Natural killer cell (primary cell): ENCODE measurements at regions of chr1 and their contacts with region 1.

Region 1: DNA sequence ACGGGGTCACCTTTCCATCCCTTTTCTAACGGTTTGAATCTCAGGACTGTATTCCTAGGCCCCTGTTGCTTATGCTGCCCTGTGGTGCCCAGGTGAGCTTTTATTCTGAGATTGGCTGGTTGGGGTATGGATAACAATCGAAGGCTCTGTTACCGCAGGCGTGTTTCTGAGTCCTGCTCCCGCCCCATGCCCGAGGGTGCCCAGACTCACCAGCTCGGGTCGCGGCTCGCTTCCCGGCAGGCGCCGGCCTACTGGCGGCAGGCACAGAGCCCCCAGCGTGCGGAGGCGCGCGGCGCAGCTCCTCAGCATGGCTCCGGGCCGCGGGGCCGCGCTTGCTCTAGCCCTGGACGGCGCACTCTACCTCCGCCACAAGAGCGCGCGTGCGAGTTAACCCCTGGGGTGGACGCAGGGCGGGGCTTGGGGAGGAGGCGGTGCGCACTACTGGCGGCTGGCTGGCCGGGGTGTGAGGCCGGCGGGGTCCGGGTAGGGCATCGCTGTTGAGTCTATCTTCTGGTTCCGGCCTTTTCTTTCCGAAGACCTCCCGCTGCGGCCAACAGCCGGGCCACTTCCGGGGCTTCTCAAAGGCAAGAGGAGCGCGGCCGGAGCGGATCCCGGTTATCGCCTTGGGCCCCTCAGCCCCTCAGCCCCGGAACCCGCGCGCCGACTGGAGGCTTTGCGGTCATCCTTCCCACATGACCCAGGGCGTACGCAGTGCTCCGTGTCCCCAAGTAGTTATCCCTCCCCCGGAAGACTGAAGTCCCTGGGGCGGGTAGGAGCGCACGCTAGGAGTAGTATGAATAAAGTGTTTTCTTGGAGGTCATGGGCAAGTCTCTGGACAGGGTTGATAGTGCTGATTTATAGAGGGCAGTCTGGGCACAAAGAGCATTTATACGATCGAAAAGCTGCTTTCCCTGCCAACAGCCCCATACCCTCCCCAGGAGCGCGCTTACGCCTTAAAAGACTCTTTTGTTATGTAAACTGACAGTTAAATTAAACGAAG is at the start of gene THEM4:
- DNase-seq: peak; percentile 92 to 93
- ATAC-seq: peak; percentile 95 to 99 (median 95)
- H3K4me3 ChIP-seq: peak within 1 kb of the TSS; percentile 74
- H3K4me3 Mint-ChIP-seq: peak within 1 kb of the TSS; percentile 86
- H3K27ac ChIP-seq: peak within 1 kb of the TSS; percentile 88
- H3K27ac Mint-ChIP-seq: peak within 1 kb of the TSS; percentile 93 to 94
- H3K4me1 ChIP-seq: peaks cover 28% of the 10 kb centered on the region
- H3K4me1 Mint-ChIP-seq: peaks cover 27 to 33% of the 10 kb centered on the region in 2 donors
- H3K27me3 ChIP-seq: no peaks in the 10 kb centered on the region
- H3K27me3 Mint-ChIP-seq: no peaks in the 10 kb centered on the region
- CTCF ChIP-seq: no peak
- total RNA-seq, gene THEM4: 11.9 to 16.2 (median 15.5) TPM

Region 2: GRCh38 chr1:151710187-151710840 is 199.1 kb before region 1 on chr1:
- intact Hi-C with region 1: no loop called
- DNase-seq: peak in 1 of 2 donors; percentile 43
- ATAC-seq: no peak
- H3K4me3 ChIP-seq: no peak overlapping the region
- H3K4me3 Mint-ChIP-seq: no peak overlapping the region
- H3K27ac ChIP-seq: no peak overlapping the region
- H3K27ac Mint-ChIP-seq: no peak overlapping the region
- H3K4me1 ChIP-seq: no peaks in the 10 kb centered on the region
- H3K4me1 Mint-ChIP-seq: peaks cover 0 to 6% of the 10 kb centered on the region in 2 donors
- H3K27me3 ChIP-seq: no peaks in the 10 kb centered on the region
- H3K27me3 Mint-ChIP-seq: peaks cover 10 to 26% of the 10 kb centered on the region in 2 donors
- CTCF ChIP-seq: no peak

Region 3: GRCh38 chr1:151867785-151868411 is 41.6 kb before region 1 on chr1:
- intact Hi-C with region 1: no loop called
- DNase-seq: no peak
- ATAC-seq: no peak
- H3K4me3 ChIP-seq: no peak overlapping the region
- H3K4me3 Mint-ChIP-seq: no peak overlapping the region
- H3K27ac ChIP-seq: no peak overlapping the region
- H3K27ac Mint-ChIP-seq: no peak overlapping the region
- H3K4me1 ChIP-seq: no peaks in the 10 kb centered on the region
- H3K4me1 Mint-ChIP-seq: no peaks in the 10 kb centered on the region
- H3K27me3 ChIP-seq: no peaks in the 10 kb centered on the region
- H3K27me3 Mint-ChIP-seq: peaks cover 0 to 15% of the 10 kb centered on the region in 2 donors
- CTCF ChIP-seq: no peak

Region 4: GRCh38 chr1:151945725-151946364 is 36.4 kb after region 1 on chr1:
- intact Hi-C with region 1: loop called (anchors 5 kb)
- DNase-seq: peak; percentile 79 to 94
- ATAC-seq: peak; percentile 67 to 89 (median 87)
- H3K4me3 ChIP-seq: no peak overlapping the region
- H3K4me3 Mint-ChIP-seq: peak overlapping the region; percentile 86
- H3K27ac ChIP-seq: peak overlapping the region; percentile 93
- H3K27ac Mint-ChIP-seq: peak overlapping the region; percentile 89 to 95
- H3K4me1 ChIP-seq: peaks cover 22% of the 10 kb centered on the region
- H3K4me1 Mint-ChIP-seq: peaks cover 23 to 43% of the 10 kb centered on the region in 2 donors
- H3K27me3 ChIP-seq: no peaks in the 10 kb centered on the region
- H3K27me3 Mint-ChIP-seq: peaks cover 0 to 3% of the 10 kb centered on the region in 2 donors
- CTCF ChIP-seq: no peak

Region 5: GRCh38 chr1:152013664-152014237 is 104.3 kb after region 1 on chr1:
- intact Hi-C with region 1: no loop called
- DNase-seq: peak in 1 of 2 donors; percentile 65
- ATAC-seq: peak in 1 of 3 donors; percentile 38
- H3K4me3 ChIP-seq: no peak overlapping the region
- H3K4me3 Mint-ChIP-seq: no peak overlapping the region
- H3K27ac ChIP-seq: no peak overlapping the region
- H3K27ac Mint-ChIP-seq: no peak overlapping the region
- H3K4me1 ChIP-seq: no peaks in the 10 kb centered on the region
- H3K4me1 Mint-ChIP-seq: peaks cover 0 to 5% of the 10 kb centered on the region in 2 donors
- H3K27me3 ChIP-seq: peaks cover 2% of the 10 kb centered on the region
- H3K27me3 Mint-ChIP-seq: peaks cover 9 to 12% of the 10 kb centered on the region in 2 donors
- CTCF ChIP-seq: peak; percentile 35

Region 6: DNA sequence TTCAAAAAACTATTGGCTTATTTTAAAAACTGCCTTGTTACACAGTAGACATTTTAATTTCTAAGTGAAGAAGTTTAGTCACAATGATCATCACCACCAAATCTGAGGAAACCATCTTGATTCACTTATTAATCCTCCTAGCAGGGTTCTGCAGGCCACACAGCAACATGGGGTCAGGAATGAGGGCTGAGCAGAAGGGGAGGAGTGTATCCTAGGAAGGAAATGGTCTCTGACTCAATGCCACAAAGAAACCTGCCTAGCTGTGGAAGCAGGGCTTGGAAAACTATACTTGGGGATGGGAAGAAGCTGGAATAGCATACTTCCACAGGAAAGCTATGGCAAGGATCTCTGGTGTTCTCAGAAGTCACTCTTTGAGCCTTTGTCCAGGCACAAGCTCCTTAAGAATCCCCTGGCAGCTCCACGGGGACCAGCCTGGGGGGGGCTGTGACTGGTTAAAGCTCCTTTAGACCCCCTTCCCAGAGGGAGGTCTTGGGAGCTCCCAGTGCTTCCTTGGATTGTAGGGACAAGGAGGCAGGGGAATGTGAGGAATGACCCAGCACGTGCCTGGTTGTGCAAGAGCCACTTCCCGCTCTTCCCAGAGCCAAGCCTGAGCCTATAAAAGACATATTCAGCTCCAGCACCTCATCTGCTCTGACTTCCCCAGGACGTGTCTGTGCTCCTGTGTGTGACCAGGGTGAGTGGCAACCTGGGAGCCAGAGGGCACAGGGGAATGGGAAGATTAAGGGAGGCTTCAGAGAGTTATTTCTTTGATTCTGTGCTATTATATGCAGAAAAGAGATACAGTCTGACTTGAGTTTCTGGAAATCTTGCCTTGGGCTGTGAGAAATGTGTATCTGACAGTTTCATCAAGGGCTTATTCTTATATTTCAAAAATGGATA is 788.5 kb after region 1 on chr1 and contains the start of gene LCE2A:
- intact Hi-C with region 1: no loop called
- DNase-seq: no peak
- ATAC-seq: no peak
- H3K4me3 ChIP-seq: no peak within 1 kb of the TSS
- H3K4me3 Mint-ChIP-seq: no peak within 1 kb of the TSS
- H3K27ac ChIP-seq: no peak within 1 kb of the TSS
- H3K27ac Mint-ChIP-seq: no peak within 1 kb of the TSS
- H3K4me1 ChIP-seq: no peaks in the 10 kb centered on the region
- H3K4me1 Mint-ChIP-seq: no peaks in the 10 kb centered on the region
- H3K27me3 ChIP-seq: no peaks in the 10 kb centered on the region
- H3K27me3 Mint-ChIP-seq: peaks cover 14 to 27% of the 10 kb centered on the region in 2 donors
- CTCF ChIP-seq: no peak
- total RNA-seq, gene LCE2A: not detected